ENCODE measurements at regions of chr17 and their contacts with region 1.

Region 1: GRCh38 chr17:82320956-82321927 is 3.8 kb upstream of the CD7 start:
- DNase-seq: peak; percentile 91
- ATAC-seq: peak; percentile 24
- H3K4me3 Mint-ChIP-seq: no peak overlapping the region
- H3K27ac Mint-ChIP-seq: no peak overlapping the region
- H3K4me1 Mint-ChIP-seq: peaks cover 25% of the 10 kb centered on the region
- H3K27me3 Mint-ChIP-seq: no peaks in the 10 kb centered on the region

Region 2: GRCh38 chr17:82205719-82206508 is 115.3 kb before region 1 on chr17:
- CTCF ChIA-PET with region 1: interaction called, 4 read pairs
- POLR2A ChIA-PET with region 1: no interaction called
- intact Hi-C with region 1: loop called in 1 of 2 experiments (anchors 1 kb)
- DNase-seq: peak; percentile 89
- ATAC-seq: peak; percentile 76
- H3K4me3 Mint-ChIP-seq: peak overlapping the region; percentile 60
- H3K27ac Mint-ChIP-seq: peak overlapping the region; percentile 93
- H3K4me1 Mint-ChIP-seq: peaks cover 52% of the 10 kb centered on the region
- H3K27me3 Mint-ChIP-seq: no peaks in the 10 kb centered on the region

Region 3: GRCh38 chr17:82244413-82245140 is 76.7 kb before region 1 on chr17:
- CTCF ChIA-PET with region 1: interaction called, 4 read pairs
- POLR2A ChIA-PET with region 1: no interaction called
- intact Hi-C with region 1: loop called (anchors 1 to 2 kb)
- DNase-seq: peak; percentile 72
- ATAC-seq: no peak
- H3K4me3 Mint-ChIP-seq: peak overlapping the region; percentile 15
- H3K27ac Mint-ChIP-seq: peak overlapping the region; percentile 75
- H3K4me1 Mint-ChIP-seq: peaks cover 50% of the 10 kb centered on the region
- H3K27me3 Mint-ChIP-seq: no peaks in the 10 kb centered on the region

Region 4: GRCh38 chr17:82292251-82293154 is 28.7 kb before region 1 on chr17:
- CTCF ChIA-PET with region 1: interaction called, 11 read pairs
- POLR2A ChIA-PET with region 1: interaction called, 94 read pairs
- intact Hi-C with region 1: loop called (anchors 1 kb)
- DNase-seq: peak; percentile 96
- ATAC-seq: peak; percentile 89
- H3K4me3 Mint-ChIP-seq: peak overlapping the region; percentile 78
- H3K27ac Mint-ChIP-seq: peak overlapping the region; percentile 85
- H3K4me1 Mint-ChIP-seq: peaks cover 71% of the 10 kb centered on the region
- H3K27me3 Mint-ChIP-seq: no peaks in the 10 kb centered on the region

Region 5: GRCh38 chr17:82303944-82304808 is 17.1 kb before region 1 on chr17:
- CTCF ChIA-PET with region 1: interaction called, 23 read pairs
- POLR2A ChIA-PET with region 1: interaction called, 94 read pairs
- intact Hi-C with region 1: loop called (anchors 1 kb)
- DNase-seq: peak; percentile 31
- ATAC-seq: no peak
- H3K4me3 Mint-ChIP-seq: peak overlapping the region; percentile 80
- H3K27ac Mint-ChIP-seq: peak overlapping the region; percentile 100
- H3K4me1 Mint-ChIP-seq: peaks cover 72% of the 10 kb centered on the region
- H3K27me3 Mint-ChIP-seq: no peaks in the 10 kb centered on the region

Measured in activated CD4-positive, alpha-beta T cell treated with anti-CD3 and anti-CD28 coated beads for 36 hours (primary cell).